HEK293 (cell line): ENCODE measurements at regions of chrX and their contacts with region 1.

Region 1: GRCh38 chrX:109890895-109891502 is 111.9 kb upstream of the TMEM164 start:
- H3K4me3 ChIP-seq: no peak overlapping the region
- H3K27ac ChIP-seq: no peak overlapping the region
- H3K4me1 ChIP-seq: no peaks in the 10 kb centered on the region
- CTCF ChIP-seq: peak; percentile 58

Region 2: DNA sequence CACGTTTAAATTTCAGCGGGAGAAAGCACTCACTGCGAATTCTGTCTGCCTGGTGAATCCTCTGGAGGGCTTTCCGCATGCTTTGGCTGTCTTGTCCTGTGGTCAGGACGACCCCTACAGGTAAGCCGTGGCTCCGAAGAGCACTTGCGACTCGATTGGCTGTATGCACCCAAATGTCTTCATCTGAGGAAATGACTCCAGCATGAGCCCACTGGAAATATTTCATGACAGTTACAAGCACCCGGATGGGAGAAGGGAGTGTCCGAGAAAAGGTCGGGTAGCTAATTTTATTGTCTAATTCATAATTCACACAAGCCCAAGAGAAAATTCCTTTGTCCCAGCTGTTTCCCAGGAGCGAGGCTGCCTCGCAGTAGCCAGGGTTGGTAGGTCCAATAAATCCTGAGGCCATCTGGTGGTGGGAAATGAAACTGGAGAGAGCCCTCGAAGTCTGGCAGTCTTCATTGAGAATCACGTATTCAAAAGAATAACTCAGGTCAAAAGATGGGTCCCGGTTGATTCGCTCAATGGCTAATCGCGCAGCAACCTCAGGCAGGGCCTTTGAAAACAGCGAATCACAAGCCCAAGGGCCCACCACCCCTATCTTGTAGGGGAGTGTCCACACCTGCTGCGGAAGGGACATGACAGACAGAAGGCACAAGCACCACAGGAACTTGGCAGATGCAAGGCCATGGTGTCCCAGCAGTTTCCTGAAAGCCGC is 415.7 kb before region 1 on chrX:
- CTCF ChIA-PET with region 1: interaction called, 16 read pairs
- POLR2A ChIA-PET with region 1: no interaction called
- H3K4me3 ChIP-seq: no peak overlapping the region
- H3K27ac ChIP-seq: no peak overlapping the region
- H3K4me1 ChIP-seq: no peaks in the 10 kb centered on the region
- CTCF ChIP-seq: peak; percentile 44

Region 3: DNA sequence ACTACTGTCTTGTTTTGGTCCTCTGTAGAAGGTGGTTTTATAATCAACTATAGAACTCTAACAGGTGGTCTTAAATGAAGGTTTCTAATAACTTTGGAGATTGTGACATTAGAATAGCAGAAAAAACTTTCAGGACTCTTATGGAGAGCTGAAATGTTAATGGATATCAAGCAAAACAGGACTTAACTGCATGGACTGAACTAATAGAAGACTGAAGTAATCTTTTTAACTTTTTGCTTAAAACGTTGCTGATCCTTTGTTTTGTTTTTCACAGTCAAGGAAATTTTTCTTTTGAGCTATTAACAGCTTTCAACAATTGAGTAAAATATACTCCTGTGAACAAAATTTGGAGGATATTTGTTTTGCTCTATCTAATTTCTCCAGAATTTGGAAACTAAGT is 337.1 kb before region 1 on chrX:
- CTCF ChIA-PET with region 1: interaction called, 11 read pairs
- POLR2A ChIA-PET with region 1: no interaction called
- H3K4me3 ChIP-seq: no peak overlapping the region
- H3K27ac ChIP-seq: no peak overlapping the region
- H3K4me1 ChIP-seq: no peaks in the 10 kb centered on the region
- CTCF ChIP-seq: no peak

Region 4: DNA sequence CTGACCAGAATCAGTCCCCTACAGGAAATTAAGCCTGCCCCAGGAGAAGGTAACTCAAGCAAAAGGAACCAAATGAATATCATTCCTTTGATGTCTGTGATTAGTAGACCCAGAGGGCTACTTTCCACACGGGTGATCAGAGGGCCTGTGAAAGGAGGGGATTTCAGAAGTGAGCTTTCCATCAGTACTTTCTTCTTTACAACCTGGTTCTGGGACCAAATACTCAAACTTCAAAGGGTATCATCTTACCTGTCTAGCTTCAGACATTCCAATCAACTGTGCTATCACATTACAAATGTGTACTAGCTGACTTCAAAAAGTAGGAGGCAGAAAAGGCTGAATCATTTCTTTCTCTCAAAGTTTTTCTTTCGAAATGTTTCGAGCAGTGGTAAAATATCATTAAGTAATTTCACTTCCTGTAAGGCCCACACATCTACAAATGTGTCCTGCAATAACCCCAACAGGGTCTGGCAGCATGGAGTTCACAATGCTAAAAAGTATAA is 181.8 kb before region 1 on chrX:
- CTCF ChIA-PET with region 1: interaction called, 166 read pairs
- POLR2A ChIA-PET with region 1: no interaction called
- H3K4me3 ChIP-seq: no peak overlapping the region
- H3K27ac ChIP-seq: no peak overlapping the region
- H3K4me1 ChIP-seq: peaks cover 3% of the 10 kb centered on the region; the same call in 1 of the 2 replicates
- CTCF ChIP-seq: no peak

Region 5: DNA sequence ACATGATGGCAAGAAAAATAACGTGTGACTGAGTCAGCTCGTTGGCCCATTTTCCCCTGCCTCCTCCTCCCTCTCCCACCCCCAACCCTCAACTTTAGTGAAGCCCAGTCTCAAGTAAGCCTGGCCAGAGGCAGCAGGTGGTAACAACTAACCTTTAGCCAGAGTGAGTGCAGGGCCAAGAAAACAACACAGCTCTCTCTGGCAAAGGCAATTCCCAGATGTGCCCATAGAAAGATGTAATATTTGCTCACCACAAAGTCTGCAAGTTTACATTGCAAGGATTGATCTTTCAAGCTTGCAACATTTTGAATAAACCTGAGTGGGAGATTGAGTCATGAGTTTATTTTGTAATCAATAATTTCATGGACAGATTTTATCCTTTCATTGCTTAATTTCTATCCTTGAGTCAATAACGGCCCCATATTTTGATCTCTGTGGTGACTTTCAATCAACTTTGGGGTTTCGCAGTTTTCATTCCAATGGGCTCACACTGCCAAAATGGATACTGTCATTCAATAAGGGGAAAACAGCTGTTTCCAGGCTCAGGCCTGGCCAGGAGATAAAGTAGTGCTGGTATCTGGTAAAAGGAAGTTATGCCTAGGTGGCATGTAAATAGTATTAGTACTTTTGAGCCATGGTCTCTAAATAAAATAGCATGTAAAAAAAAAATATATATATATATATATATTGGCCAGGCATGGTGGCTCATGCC is 18.8 kb before region 1 on chrX:
- CTCF ChIA-PET with region 1: interaction called, 54 read pairs
- POLR2A ChIA-PET with region 1: no interaction called
- H3K4me3 ChIP-seq: no peak overlapping the region
- H3K27ac ChIP-seq: no peak overlapping the region
- H3K4me1 ChIP-seq: no peaks in the 10 kb centered on the region; the same call in 1 of the 2 replicates
- CTCF ChIP-seq: no peak

Region 6: GRCh38 chrX:109902665-109903064 is 11.7 kb after region 1 on chrX:
- CTCF ChIA-PET with region 1: interaction called, 15 read pairs
- POLR2A ChIA-PET with region 1: no interaction called
- H3K4me3 ChIP-seq: no peak overlapping the region
- H3K27ac ChIP-seq: no peak overlapping the region
- H3K4me1 ChIP-seq: no peaks in the 10 kb centered on the region
- CTCF ChIP-seq: no peak

Region 7: GRCh38 chrX:109918753-109919152 is 27.8 kb after region 1 on chrX:
- CTCF ChIA-PET with region 1: interaction called, 12 read pairs
- POLR2A ChIA-PET with region 1: no interaction called
- H3K4me3 ChIP-seq: no peak overlapping the region
- H3K27ac ChIP-seq: no peak overlapping the region
- H3K4me1 ChIP-seq: no peaks in the 10 kb centered on the region
- CTCF ChIP-seq: no peak